Activated CD4-positive, alpha-beta T cell treated with anti-CD3 and anti-CD28 coated beads, Interleukin-2, amount 10 ng/mL, durations not matched to agents 7 days and 5 days (primary cell): ENCODE measurements at regions of chr14 and their contacts with region 1.

Region 1: GRCh38 chr14:98321838-98322237 is 950.2 kb downstream of the BCL11B start:
- DNase-seq: no peak
- H3K4me3 Mint-ChIP-seq: no peak overlapping the region
- H3K27ac Mint-ChIP-seq: peak overlapping the region; percentile 38
- H3K4me1 Mint-ChIP-seq: no peaks in the 10 kb centered on the region
- H3K27me3 Mint-ChIP-seq: no peaks in the 10 kb centered on the region

Region 2: DNA sequence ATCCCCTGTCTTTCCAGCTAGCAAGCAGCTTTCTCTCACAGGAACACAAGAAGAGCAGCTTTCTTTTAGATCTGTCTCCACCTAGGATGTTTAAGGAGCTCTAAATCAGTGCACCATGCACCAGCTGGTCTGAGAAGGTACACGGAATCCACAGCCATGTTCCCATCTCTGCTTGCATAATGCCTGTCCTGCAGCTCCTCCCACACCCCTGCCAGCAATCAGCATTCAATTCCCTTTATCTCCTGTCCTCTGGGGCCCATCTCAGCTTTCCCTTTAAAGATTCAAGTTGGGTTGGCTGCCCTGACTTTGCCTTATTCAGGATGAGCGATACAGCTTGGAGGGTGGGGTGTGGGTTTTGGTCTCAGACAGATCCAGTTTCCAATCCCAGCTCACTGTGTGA is 123.9 kb after region 1 on chr14:
- CTCF ChIA-PET with region 1: no interaction called
- POLR2A ChIA-PET with region 1: interaction called, 15 read pairs
- DNase-seq: no peak
- H3K4me3 Mint-ChIP-seq: no peak overlapping the region
- H3K27ac Mint-ChIP-seq: no peak overlapping the region
- H3K4me1 Mint-ChIP-seq: peaks cover 15% of the 10 kb centered on the region
- H3K27me3 Mint-ChIP-seq: no peaks in the 10 kb centered on the region